GM12878 (cell line): ENCODE measurements at regions of chr2 and their contacts with region 1.

Region 1: GRCh38 chr2:3728104-3729054 is 25.0 kb downstream of the DCDC2C start:
- DNase-seq: no peak
- ATAC-seq: peak; percentile 63
- H3K4me3 ChIP-seq: no peak overlapping the region
- H3K27ac ChIP-seq: no peak overlapping the region
- H3K4me1 ChIP-seq: no peaks in the 10 kb centered on the region
- H3K27me3 ChIP-seq: no peaks in the 10 kb centered on the region; a peak in 2 of 4 replicates
- CTCF ChIP-seq: peak; percentile 37 to 63 (median 59); a peak in 5 of 6 replicates
- EP300 ChIP-seq: no peak
- POLR2A ChIP-seq: no peak
- RAD21 ChIP-seq: peak; percentile 64

Region 2: DNA sequence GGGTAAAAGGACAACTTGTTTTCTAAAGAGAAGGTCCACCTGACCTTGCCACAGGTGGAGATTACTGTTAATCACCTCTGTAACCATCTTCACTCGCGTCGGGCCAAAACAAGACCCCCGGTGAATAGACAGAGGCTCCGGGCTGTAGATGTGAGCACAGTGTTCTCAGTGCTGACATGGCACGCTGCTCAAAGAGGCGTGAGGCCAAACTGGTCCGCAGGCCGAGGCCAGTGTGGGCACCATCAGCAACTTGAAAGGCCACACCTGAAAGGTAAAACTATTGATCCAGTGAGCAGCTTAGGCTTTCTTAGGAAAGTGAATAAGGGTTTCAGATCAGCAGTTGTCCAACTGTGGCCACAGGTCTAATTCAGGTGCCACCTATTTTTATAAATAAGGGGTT is 1472.4 kb before region 1 on chr2:
- CTCF ChIA-PET with region 1: no interaction called
- POLR2A ChIA-PET with region 1: no interaction called
- RAD21 ChIA-PET with region 1: no interaction called
- SMC1A ChIA-PET with region 1: no interaction called
- in situ Hi-C with region 1: no loop called
- intact Hi-C with region 1: loop called (anchors 5 kb)
- DNase-seq: no peak
- ATAC-seq: no peak
- H3K4me3 ChIP-seq: no peak overlapping the region
- H3K27ac ChIP-seq: no peak overlapping the region
- H3K4me1 ChIP-seq: no peaks in the 10 kb centered on the region
- H3K27me3 ChIP-seq: no peaks in the 10 kb centered on the region
- CTCF ChIP-seq: no peak
- EP300 ChIP-seq: no peak
- POLR2A ChIP-seq: no peak
- RAD21 ChIP-seq: no peak

Region 3: GRCh38 chr2:3712831-3713503 is 15.4 kb before region 1 on chr2:
- CTCF ChIA-PET with region 1: no interaction called
- POLR2A ChIA-PET with region 1: no interaction called
- RAD21 ChIA-PET with region 1: no interaction called
- SMC1A ChIA-PET with region 1: no interaction called
- in situ Hi-C with region 1: no loop called
- intact Hi-C with region 1: no loop called
- DNase-seq: no peak
- ATAC-seq: no peak
- H3K4me3 ChIP-seq: no peak overlapping the region
- H3K27ac ChIP-seq: no peak overlapping the region
- H3K4me1 ChIP-seq: no peaks in the 10 kb centered on the region
- H3K27me3 ChIP-seq: 0 out of 4 replicates have a peak, but pooled peaks cover 1 to 4% of the 10 kb centered on the region in 2 experiments
- CTCF ChIP-seq: no peak
- EP300 ChIP-seq: no peak
- POLR2A ChIP-seq: no peak
- RAD21 ChIP-seq: no peak

Region 4: DNA sequence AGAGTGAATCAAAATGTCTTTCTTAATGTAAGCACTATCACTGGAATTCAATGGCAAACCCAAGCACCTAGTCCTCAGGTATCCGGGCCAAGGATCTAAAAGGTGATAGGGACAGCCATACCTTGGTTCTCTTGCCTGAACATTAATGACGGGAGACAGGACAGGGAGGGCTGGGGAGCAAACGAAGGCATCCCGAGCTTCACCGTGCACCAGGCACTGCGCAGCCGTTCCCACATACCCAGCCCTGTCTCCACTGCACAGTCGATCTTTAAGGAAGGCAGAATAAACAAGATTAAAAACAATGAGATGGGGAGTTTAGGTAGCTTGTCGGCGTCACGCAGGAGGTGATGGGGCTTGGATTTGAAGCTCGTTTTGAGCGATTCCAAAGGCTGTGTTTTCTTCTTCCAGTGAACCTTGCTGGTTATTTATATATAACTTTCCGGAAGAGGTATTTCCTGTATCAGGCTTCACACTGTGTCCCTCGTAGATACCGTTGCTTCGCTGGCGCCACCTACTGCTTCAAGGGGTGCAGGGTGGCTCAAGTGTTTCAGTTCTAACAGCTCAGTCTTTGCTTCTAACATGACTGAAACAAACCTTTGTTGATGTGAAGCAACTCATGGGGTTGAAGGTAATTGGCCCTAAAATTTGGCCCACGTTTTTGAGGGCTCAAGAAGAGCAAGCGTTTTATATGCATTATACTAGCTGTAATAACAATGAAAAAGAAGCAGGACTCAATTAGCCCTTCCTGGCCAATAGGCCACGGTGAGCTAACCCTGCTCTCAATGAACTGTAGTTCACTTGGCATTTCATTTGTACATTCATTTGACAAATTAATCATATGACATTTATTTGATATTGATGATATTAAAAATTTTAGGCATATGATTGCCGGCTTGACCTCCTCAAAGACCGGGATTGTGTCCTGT is 52.4 kb after region 1 on chr2:
- CTCF ChIA-PET with region 1: interaction called, 51 read pairs
- POLR2A ChIA-PET with region 1: interaction called, 3 read pairs
- RAD21 ChIA-PET with region 1: interaction called, 15 read pairs
- SMC1A ChIA-PET with region 1: interaction called, 10 read pairs
- in situ Hi-C with region 1: no loop called
- intact Hi-C with region 1: loop called (anchors 1 kb)
- DNase-seq: peak; percentile 28
- ATAC-seq: peak; percentile 100
- H3K4me3 ChIP-seq: no peak overlapping the region
- H3K27ac ChIP-seq: no peak overlapping the region
- H3K4me1 ChIP-seq: no peaks in the 10 kb centered on the region
- H3K27me3 ChIP-seq: peaks cover 0 to 2% of the 10 kb centered on the region in 2 experiments; a peak in 2 of 4 replicates
- CTCF ChIP-seq: peak; percentile 75 to 82 (median 76)
- EP300 ChIP-seq: no peak
- POLR2A ChIP-seq: no peak
- RAD21 ChIP-seq: peak; percentile 61

Region 5: DNA sequence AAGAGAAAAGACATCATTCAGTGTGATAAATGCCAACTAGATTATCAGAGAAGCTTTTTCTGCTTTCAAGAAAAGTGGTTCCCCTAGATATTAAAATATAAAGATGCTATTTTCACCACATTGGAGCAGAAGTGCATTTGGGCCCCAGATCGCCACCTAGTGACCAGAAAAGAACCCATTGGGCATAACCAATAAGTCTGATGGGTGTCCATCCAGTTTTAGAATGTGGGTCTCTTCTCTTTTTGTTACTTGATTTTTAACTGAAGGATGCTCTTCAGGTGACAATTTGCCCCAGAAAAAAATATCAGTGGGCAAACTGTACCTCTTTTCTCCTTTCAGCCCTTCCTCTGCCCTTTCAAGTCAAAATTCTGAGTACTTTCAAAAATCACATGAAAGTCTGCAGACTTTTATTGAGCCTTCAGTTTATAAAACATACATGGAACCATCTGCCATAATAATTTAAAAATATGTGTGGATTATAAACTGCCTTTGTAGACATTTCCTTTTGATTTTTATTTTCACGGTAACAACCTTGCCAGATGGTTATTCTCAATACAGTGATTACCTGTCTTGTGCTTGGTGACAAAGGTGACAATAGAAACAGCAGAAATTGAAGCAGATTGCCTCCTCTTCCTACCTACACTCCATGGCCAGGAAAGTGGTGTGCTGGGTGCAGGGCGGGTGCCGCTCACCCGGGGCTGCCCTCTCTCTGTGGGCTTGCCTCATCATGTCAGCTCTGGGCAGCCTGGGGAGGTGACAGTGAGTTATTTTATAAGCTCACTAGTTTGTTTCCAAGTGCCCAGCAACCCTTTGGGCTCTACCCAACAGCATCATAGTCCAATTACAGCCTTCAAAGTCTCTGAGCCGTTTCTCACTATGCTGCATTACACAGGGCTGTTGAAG is 99.5 kb after region 1 on chr2:
- CTCF ChIA-PET with region 1: interaction called, 43 read pairs
- POLR2A ChIA-PET with region 1: no interaction called
- RAD21 ChIA-PET with region 1: interaction called, 4 read pairs
- SMC1A ChIA-PET with region 1: no interaction called
- in situ Hi-C with region 1: no loop called
- intact Hi-C with region 1: loop called (anchors 1 kb)
- DNase-seq: no peak
- ATAC-seq: peak; percentile 76
- H3K4me3 ChIP-seq: no peak overlapping the region
- H3K27ac ChIP-seq: no peak overlapping the region
- H3K4me1 ChIP-seq: no peaks in the 10 kb centered on the region
- H3K27me3 ChIP-seq: no peaks in the 10 kb centered on the region; a peak in 2 of 4 replicates
- CTCF ChIP-seq: peak; percentile 50 to 66 (median 57); a peak in 5 of 6 replicates
- EP300 ChIP-seq: no peak
- POLR2A ChIP-seq: no peak
- RAD21 ChIP-seq: peak; percentile 38